ENCODE measurements at regions of chr20 and their contacts with region 1.

Region 1: DNA sequence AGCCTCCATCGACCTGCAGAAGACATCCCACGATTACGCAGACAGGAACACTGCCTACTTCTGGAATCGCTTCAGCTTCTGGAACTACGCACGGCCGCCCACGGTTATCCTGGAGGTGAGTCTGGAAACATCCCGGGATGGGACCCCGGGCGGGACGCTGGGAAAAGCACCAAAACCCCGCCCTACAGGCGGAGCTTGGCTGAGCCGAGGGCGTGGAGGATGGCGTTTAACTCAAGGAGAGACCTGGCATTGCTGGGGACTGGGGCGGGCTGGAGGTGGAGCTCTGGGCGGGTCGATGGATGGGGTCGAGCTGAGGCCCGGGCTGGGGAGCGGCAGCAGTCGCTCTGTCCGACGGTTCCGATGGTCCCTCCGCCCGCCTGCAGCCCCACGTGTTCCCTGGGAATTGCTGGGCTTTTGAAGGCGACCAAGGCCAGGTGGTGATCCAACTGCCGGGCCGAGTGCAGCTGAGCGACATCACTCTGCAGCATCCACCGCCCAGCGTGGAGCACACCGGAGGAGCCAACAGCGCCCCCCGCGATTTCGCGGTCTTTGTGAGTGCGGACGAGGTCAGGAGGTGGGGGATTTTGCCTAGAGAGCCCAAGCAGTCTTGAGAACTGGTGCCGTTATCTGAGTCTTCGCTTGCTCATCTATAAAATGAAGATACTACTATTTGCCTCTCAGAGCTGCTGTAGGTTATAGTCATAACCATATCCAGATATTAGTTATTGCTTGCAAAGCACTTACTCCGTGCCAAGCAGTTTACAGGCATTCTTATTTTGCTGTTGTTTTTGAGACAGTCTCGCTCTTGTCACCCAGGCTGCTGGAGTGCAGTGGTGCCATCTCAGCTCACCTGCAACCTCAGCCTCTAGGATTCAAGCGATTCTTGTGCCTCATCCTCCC is 3.8 kb downstream of the SPAG4 start:
- DNase-seq: peak; percentile 88
- H3K4me3 Mint-ChIP-seq: peak overlapping the region; percentile 82
- H3K27ac Mint-ChIP-seq: peak overlapping the region; percentile 70
- H3K4me1 Mint-ChIP-seq: peaks cover 47% of the 10 kb centered on the region
- H3K27me3 Mint-ChIP-seq: peaks cover 4% of the 10 kb centered on the region

Region 2: GRCh38 chr20:34891166-34892062 is 728.0 kb before region 1 on chr20:
- CTCF ChIA-PET with region 1: no interaction called
- intact Hi-C with region 1: no loop called
- DNase-seq: peak; percentile 71
- H3K4me3 Mint-ChIP-seq: peak overlapping the region; percentile 16
- H3K27ac Mint-ChIP-seq: peak overlapping the region; percentile 87
- H3K4me1 Mint-ChIP-seq: peaks cover 48% of the 10 kb centered on the region
- H3K27me3 Mint-ChIP-seq: no peaks in the 10 kb centered on the region

Region 3: GRCh38 chr20:35277531-35278395 is 341.7 kb before region 1 on chr20 and contains the start of gene MMP24OS:
- CTCF ChIA-PET with region 1: no interaction called
- intact Hi-C with region 1: loop called (anchors 1 kb)
- DNase-seq: peak; percentile 87
- H3K4me3 Mint-ChIP-seq: peak within 1 kb of the TSS; percentile 97
- H3K27ac Mint-ChIP-seq: peak within 1 kb of the TSS; percentile 96
- H3K4me1 Mint-ChIP-seq: peaks cover 16% of the 10 kb centered on the region
- H3K27me3 Mint-ChIP-seq: no peaks in the 10 kb centered on the region
- total RNA-seq, gene MMP24OS: 26.4 to 29.2 TPM

Region 4: DNA sequence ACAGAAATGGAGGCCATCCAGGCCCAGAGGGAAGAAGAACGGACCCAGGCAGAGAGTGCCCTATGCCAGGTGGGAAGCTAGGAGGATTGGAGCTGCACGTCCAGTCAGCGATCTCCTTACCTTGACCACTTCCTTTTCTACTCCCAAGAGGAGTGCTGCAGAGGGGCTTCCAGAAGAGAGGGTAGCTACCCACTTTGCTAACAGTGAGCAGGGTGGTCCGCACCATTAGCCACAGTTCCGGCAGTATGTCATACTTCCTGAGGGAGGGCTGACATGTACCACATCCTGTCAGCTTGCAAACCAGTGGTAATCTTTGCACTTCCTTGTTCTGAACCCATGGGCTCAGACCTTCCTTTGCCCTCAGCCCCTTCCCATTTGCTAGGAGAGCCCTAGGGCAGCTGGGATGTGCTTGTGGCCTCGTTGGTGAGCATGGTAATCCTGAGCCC is 128.7 kb before region 1 on chr20:
- CTCF ChIA-PET with region 1: no interaction called
- intact Hi-C with region 1: loop called (anchors 2 kb)
- DNase-seq: peak; percentile 80
- H3K4me3 Mint-ChIP-seq: peak overlapping the region; percentile 98
- H3K27ac Mint-ChIP-seq: peak overlapping the region; percentile 97
- H3K4me1 Mint-ChIP-seq: peaks cover 42% of the 10 kb centered on the region
- H3K27me3 Mint-ChIP-seq: no peaks in the 10 kb centered on the region

Region 5: GRCh38 chr20:35601008-35601973 is 18.2 kb before region 1 on chr20:
- CTCF ChIA-PET with region 1: interaction called, 8 read pairs
- intact Hi-C with region 1: loop called (anchors 1 kb)
- DNase-seq: peak; percentile 91
- H3K4me3 Mint-ChIP-seq: peak overlapping the region; percentile 64
- H3K27ac Mint-ChIP-seq: no peak overlapping the region
- H3K4me1 Mint-ChIP-seq: peaks cover 7% of the 10 kb centered on the region
- H3K27me3 Mint-ChIP-seq: peaks cover 13% of the 10 kb centered on the region

Region 6: GRCh38 chr20:35771689-35772562 is 152.5 kb after region 1 on chr20 and contains the start of gene PHF20:
- CTCF ChIA-PET with region 1: no interaction called
- intact Hi-C with region 1: loop called (anchors 2 kb)
- DNase-seq: peak; percentile 100
- H3K4me3 Mint-ChIP-seq: peak within 1 kb of the TSS; percentile 80
- H3K27ac Mint-ChIP-seq: peak within 1 kb of the TSS; percentile 82
- H3K4me1 Mint-ChIP-seq: peaks cover 74% of the 10 kb centered on the region
- H3K27me3 Mint-ChIP-seq: no peaks in the 10 kb centered on the region
- total RNA-seq, gene PHF20: 39.8 to 46.0 TPM

Measured in activated naive CD4-positive, alpha-beta T cell treated with anti-CD3 and anti-CD28 coated beads for 36 hours (primary cell).